Prostate gland (tissue), 2 donors: ENCODE measurements at regions of chr3 and their contacts with region 1.

Region 1: DNA sequence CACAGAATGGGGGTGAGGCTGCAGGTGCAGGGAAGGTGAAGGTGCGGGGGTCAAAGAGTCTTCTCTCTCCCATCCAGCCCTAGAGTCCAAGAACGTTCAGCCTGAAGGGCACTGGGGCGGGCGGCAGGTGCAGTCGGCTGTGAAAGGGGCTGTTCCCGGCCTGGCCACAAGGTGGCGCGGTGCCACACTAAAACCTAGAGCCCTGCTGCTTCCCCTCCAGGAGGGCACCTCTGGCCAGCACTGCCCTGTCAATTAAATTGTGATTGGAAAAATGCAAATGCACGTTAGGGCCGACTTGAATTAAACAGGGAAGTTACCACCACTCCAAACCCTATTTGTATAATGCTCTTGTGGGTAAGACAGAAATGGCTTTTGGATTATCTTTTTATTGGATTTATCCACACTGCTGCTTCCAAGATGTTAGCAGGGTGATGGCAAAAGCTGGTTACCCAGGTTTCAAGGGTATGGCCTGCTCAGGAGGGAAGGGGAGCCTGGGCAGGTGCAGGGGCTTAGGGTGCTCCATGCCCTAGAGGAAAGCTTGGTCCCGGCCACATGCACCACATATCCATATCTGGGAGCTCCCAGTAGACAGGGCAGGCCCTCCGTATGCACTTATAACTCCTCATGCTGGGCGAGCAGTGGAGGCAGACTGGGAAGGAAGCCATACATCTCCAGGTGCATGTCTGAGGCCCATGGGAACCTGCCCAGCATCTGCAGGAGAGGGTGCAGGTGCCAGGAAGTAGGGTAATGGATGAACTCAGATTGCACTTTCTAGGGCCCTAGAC is 119.8 kb downstream of the ADCY5 start:
- DNase-seq: peak; percentile 66
- H3K4me3 ChIP-seq: no peak overlapping the region
- H3K27ac ChIP-seq: peak overlapping the region in 1 of 2 donors; percentile 69
- H3K4me1 ChIP-seq: no peaks in the 10 kb centered on the region
- H3K27me3 ChIP-seq: no peaks in the 10 kb centered on the region
- CTCF ChIP-seq: peak; percentile 93 to 99 (median 95)
- POLR2A ChIP-seq: no peak

Region 2: DNA sequence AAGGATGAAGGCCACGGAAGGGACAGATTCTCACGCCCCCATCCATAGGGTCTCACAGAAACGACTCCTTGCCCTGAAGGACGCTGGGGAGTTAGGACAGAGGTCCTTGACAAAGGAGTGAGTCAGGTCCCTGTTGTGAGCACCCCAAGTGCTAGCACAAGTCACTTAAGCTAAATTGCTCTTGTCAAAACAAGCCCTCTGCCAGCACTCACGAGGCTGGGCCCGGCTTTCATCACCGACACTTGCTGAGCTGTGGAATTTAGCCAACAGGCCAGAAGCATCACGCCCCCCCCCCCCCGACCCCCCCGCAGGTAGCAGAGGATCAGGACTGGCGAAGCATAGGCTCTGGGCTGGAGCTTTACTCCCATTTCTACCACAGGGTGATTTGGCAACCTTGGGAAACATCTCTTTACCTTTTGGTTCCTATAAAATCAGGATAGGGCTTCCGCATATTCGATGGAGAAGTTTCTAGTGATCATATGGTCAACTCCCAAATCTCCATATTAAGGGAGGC is 44.5 kb after region 1 on chr3:
- intact Hi-C with region 1: loop called (anchors 5 kb)
- DNase-seq: no peak
- H3K4me3 ChIP-seq: no peak overlapping the region
- H3K27ac ChIP-seq: peak overlapping the region; percentile 39 to 60
- H3K4me1 ChIP-seq: no peaks in the 10 kb centered on the region
- H3K27me3 ChIP-seq: no peaks in the 10 kb centered on the region
- CTCF ChIP-seq: no peak
- POLR2A ChIP-seq: no peak

Region 3: DNA sequence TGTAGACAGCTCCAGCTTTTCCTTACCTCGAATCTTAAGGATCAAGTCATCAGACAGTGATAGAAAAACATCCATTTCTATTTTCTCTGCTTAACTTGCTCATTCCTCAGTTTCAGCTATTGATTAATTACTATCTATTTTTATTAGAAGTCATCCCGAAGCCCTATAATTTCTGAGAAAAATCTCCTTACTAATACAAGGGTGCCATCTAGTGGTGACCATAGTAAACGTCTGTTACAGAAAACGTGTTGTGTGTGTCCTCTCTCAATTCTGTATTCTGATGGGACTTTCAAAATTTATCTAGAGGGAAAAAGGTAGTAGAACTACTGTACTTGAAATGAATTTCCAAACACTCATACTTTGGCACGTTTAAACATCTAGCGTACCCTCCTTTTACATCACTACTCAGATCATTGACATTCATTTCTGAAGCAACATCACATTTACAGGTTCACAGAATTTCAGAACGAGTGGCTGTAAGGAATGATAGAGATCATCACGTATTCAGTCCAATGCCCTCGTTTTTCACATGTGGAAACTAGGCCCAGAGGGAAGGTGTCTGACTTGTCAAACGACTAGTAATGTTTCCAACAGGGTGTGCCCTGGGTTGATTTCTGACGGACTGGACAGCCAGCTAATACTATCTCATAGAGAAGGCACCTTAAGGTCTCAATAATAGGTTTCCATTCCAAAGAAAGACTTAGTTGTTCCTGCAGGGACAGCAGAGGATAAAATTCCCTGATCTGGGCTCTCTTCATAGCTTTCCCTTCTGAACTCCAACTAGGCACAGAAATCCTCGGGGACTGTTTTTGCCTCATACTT is 230.2 kb after region 1 on chr3:
- intact Hi-C with region 1: loop called (anchors 5 kb)
- DNase-seq: peak; percentile 34
- H3K4me3 ChIP-seq: no peak overlapping the region
- H3K27ac ChIP-seq: no peak overlapping the region
- H3K4me1 ChIP-seq: no peaks in the 10 kb centered on the region
- H3K27me3 ChIP-seq: no peaks in the 10 kb centered on the region
- CTCF ChIP-seq: peak; percentile 25 to 78 (median 74)
- POLR2A ChIP-seq: no peak